Ascending aorta (tissue), 2 donors: ENCODE measurements at regions of chr11 and their contacts with region 1.

Region 1: DNA sequence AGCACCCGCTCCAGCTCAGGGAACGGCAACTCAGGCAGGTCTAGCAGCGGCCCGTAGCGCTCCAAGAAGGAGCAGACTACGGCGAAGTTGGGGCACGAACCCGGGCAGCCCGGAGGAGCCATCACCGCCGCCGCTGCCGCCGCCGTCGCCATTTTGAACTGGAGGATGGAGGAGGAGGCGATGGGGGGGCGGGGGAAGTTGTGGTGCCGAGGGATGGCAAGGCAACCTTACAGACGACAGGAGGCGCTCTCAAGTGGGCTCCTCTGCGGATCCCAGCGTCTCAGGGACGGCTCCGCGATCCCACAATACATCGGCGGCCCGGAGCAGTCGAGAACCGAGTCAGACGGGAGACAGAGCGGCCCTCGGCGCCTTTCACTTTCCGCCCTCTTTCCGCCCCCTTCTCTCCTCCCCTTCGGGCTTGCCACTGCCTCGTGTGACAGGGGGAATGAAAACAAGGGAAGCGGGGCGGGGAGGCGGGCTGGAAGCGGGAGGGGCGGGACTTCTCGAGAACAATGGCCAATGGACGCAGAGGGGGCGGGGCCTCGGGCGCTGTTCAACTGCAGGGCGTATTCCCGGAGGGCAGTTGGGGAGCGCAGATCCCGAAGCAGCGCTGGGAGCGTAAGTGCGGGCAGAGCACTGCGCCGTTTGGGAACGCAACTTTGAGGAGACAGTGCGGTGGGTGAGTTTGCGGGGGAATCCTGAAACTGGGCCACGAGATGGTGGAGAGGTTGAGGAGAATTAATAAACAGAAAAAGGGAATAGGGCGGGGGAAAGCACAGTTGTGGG is at the starts of genes AAMDC and RSF1:
- DNase-seq: peak; percentile 94 to 99
- H3K4me3 ChIP-seq: peak within 1 kb of the TSS; percentile 77 to 84
- H3K27ac ChIP-seq: peak within 1 kb of the TSS; percentile 91 to 97
- H3K4me1 ChIP-seq: peaks cover 0 to 33% of the 10 kb centered on the region in 2 donors
- H3K27me3 ChIP-seq: no peaks in the 10 kb centered on the region
- CTCF ChIP-seq: peak; percentile 44 to 74 (median 68)
- total RNA-seq, gene AAMDC: 56.4 TPM
- total RNA-seq, gene RSF1: 17.8 TPM

Region 2: GRCh38 chr11:77066229-77067042 is 754.3 kb before region 1 on chr11 and contains the start of gene CAPN5:
- intact Hi-C with region 1: loop called (anchors 10 kb)
- DNase-seq: peak; percentile 58 to 96
- H3K4me3 ChIP-seq: peak within 1 kb of the TSS; percentile 80 to 84
- H3K27ac ChIP-seq: peak within 1 kb of the TSS; percentile 93
- H3K4me1 ChIP-seq: peaks cover 0 to 19% of the 10 kb centered on the region in 2 donors
- H3K27me3 ChIP-seq: no peaks in the 10 kb centered on the region
- CTCF ChIP-seq: peak; percentile 22 to 34 (median 29)
- total RNA-seq, gene CAPN5: 7.9 TPM

Region 3: DNA sequence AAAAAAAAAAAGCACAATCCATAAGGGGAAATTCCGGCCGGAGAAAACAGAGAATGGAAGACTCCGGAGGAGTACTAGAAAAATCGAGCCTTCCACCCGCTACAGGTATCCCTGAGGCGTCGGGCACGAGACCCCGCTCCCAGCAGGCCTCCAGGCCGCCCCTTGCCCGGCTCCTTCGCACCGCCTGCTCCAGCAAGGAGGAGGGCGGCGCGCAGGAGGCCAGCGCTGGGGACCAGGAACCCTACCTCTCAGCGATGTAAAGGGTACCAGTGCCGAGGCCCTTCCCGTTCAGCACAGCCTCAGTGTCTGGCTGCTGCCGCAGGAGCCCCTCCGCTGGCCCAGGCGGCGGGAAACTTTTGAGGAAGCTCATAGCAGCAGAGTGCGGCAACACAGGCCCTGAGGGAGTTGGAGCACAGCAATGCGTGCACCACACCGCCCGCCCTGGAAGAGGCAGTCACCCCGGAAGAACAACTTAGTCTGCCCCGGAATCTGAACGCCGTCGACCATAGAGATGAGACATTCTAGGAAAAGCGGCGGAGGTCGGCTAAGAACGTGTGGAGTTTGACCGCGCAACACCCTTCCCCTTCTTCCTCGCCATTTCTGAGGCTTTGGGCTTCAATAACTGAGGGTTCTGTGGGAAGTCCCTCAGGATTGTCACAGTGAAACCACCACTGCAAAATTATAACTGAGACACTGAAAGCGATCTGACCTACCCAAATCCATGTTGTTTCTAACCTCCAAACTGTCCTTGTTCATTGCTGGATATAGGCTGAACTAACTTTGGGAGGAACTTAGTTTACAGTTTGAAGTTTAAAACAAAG is 183.2 kb before region 1 on chr11 and contains the start of gene CLNS1A:
- intact Hi-C with region 1: loop called (anchors 5 kb)
- DNase-seq: peak; percentile 50 to 90
- H3K4me3 ChIP-seq: peak within 1 kb of the TSS; percentile 52 to 100
- H3K27ac ChIP-seq: peak within 1 kb of the TSS; percentile 72 to 73
- H3K4me1 ChIP-seq: peaks cover 0 to 12% of the 10 kb centered on the region in 2 donors
- H3K27me3 ChIP-seq: no peaks in the 10 kb centered on the region
- CTCF ChIP-seq: no peak
- total RNA-seq, gene CLNS1A: 43.6 TPM

Region 4: GRCh38 chr11:78168539-78169477 is 348.1 kb after region 1 on chr11:
- intact Hi-C with region 1: loop called (anchors 10 kb)
- DNase-seq: peak; percentile 87 to 98
- H3K4me3 ChIP-seq: no peak overlapping the region
- H3K27ac ChIP-seq: peak overlapping the region; percentile 96
- H3K4me1 ChIP-seq: peaks cover 6 to 46% of the 10 kb centered on the region in 2 donors
- H3K27me3 ChIP-seq: no peaks in the 10 kb centered on the region
- CTCF ChIP-seq: no peak

Region 5: GRCh38 chr11:78574386-78575381 is 753.9 kb after region 1 on chr11 and contains the start of gene NARS2:
- intact Hi-C with region 1: loop called (anchors 5 kb)
- DNase-seq: peak; percentile 94 to 99
- H3K4me3 ChIP-seq: peak within 1 kb of the TSS; percentile 84 to 95
- H3K27ac ChIP-seq: peak within 1 kb of the TSS; percentile 83 to 91
- H3K4me1 ChIP-seq: peaks cover 0 to 10% of the 10 kb centered on the region in 2 donors
- H3K27me3 ChIP-seq: no peaks in the 10 kb centered on the region
- CTCF ChIP-seq: no peak
- total RNA-seq, gene NARS2: 7.8 TPM